Left cardiac atrium (tissue), 4 donors: ENCODE measurements at regions of chr17 and their contacts with region 1.

Region 1: GRCh38 chr17:76714822-76715495 is 4.2 kb upstream of the MXRA7 start:
- DNase-seq: peak; percentile 75
- ATAC-seq: peak in 1 of 2 donors; percentile 14

Region 2: DNA sequence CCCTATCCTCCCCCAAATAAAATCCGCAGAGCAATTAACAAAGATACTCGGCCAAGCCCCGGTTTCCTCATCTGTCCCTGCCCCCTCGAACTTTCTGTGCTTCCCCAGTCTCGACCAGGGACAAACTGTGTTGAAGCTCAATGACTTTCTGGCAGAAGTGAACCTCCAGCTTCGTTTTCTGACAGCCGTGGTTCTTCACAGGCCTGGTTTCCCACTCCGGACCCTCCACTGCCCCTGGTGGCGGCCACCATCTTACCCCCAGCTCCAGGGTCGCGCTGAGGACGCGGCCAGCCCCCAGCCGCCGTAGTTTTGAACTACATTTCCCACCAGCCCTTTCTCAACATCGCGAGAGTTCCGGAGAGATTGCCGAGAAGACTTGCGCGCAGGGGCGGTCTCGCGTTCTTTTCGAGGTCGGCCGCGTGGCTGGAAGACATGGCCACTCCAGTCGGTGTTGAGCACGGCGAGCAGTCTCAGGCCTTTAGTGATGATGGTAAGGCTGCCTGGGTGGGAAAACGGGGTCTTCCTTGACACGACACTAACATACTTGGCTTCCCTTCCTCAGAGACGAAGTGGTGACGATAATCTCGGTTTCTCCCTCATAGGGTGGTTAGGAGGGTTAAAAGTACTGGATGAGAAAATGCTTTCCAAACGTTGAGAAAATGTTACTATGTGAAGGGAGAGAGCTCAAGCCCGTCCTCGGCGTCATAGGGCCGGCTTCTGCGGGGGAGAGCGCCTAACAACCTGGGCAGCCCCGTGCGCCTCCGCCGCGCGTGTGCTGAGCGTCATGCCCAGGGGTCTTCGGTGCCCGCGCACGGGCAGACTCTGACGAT is 157.4 kb before region 1 on chr17:
- intact Hi-C with region 1: loop called in 1 of 2 experiments (anchors 10 kb)
- DNase-seq: peak; percentile 96
- ATAC-seq: peak; percentile 93 to 94

Region 3: DNA sequence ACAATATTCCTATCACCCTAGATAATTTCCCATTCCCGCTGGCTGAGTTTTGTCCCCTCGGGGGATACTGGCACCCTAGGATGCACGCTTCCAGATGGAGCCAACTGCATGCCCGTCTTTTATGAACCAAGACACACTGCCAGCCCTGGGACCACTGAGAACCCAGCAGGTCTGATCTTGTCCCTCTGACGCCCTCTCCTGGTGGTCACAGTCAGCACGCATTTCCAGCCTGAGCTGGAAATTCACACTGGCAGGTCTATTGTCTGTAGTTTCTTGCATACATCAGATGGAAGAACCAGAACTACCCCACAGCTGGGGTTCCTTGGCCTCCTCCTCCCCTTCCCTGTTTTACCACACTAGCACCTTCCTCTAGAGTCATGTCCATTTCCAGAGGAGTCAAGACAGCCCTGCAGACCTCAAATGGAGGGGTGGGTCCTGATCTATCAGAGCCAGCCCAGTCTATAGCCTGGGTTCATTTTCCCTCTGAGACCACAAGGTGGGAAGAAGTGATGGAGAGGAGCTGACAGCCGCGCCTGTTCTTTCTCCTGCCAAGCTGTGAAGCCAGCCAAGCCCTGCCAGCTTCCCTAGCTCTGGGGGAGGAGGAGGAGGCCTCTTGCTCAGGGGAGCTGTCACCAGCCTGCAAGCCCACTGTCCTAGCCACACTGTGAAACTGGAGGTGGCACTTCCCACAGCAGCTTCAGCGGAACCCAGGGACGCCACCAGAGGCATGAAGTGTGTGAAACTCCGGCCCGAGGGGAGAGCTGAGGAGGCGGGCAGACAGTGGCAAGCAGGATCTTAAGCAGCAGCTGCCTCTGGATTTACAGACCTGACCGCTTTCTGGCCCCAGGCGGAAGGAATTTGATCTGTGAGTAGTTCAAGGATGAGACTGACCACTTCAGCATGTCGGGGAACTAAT is 33.5 kb before region 1 on chr17:
- intact Hi-C with region 1: loop called in 1 of 2 experiments (anchors 5 kb)
- DNase-seq: peak; percentile 80
- ATAC-seq: peak; percentile 59